ENCODE measurements at regions of chr10 and their contacts with region 1.

Region 1: GRCh38 chr10:43255634-43256431 is 11.0 kb downstream of the RASGEF1A start:
- DNase-seq: peak; percentile 36 to 73
- ATAC-seq: peak; percentile 68 to 75 (median 72)
- H3K4me3 ChIP-seq: no peak overlapping the region
- H3K4me3 Mint-ChIP-seq: peak overlapping the region; percentile 55
- H3K27ac ChIP-seq: peak overlapping the region; percentile 74
- H3K27ac Mint-ChIP-seq: peak overlapping the region; percentile 48 to 86
- H3K4me1 ChIP-seq: peaks cover 58% of the 10 kb centered on the region
- H3K4me1 Mint-ChIP-seq: peaks cover 27 to 57% of the 10 kb centered on the region in 2 donors
- H3K27me3 ChIP-seq: no peaks in the 10 kb centered on the region
- H3K27me3 Mint-ChIP-seq: no peaks in the 10 kb centered on the region
- CTCF ChIP-seq: peak; percentile 67

Region 2: DNA sequence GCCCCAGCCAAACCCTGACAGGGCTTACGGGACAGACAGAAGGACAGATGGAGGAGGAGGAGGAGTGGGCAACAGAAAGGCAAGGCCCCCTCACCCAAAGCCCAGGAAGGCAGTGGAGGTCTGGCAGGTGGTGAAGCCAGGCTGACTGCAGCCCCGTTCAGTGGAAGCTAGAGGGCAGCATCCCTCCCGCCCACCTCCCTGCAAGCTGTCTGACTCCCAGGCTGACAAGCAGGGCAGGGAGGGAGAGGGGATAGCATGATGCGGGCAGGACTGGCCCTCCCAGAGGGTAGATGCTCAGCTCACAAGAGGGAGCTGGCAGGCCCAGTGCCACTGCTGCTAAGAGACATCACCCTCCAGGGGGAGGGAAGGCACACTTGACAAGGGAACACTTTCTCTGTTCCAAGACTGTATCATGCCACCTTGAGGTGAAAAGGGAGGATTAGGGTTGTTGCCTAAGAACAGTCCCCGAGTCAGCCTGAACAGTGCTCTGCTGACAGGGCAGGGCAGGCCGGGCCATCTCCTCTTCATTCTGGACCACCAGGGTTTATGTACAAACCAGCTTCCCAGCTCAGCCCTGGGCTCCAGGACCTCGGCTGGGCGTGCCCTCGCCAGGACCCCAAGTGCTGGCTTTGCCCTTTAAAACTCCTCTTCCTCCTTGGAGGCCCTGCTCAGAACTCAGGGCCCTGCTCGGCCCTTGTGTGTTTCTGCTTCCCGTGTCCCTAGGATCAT is 50.7 kb before region 1 on chr10:
- intact Hi-C with region 1: loop called (anchors 2 kb)
- DNase-seq: peak; percentile 19 to 75
- ATAC-seq: peak; percentile 45 to 55 (median 54)
- H3K4me3 ChIP-seq: no peak overlapping the region
- H3K4me3 Mint-ChIP-seq: no peak overlapping the region
- H3K27ac ChIP-seq: no peak overlapping the region
- H3K27ac Mint-ChIP-seq: peak overlapping the region in 1 of 2 donors; percentile 66
- H3K4me1 ChIP-seq: peaks cover 43% of the 10 kb centered on the region
- H3K4me1 Mint-ChIP-seq: peaks cover 6 to 17% of the 10 kb centered on the region in 2 donors
- H3K27me3 ChIP-seq: no peaks in the 10 kb centered on the region
- H3K27me3 Mint-ChIP-seq: no peaks in the 10 kb centered on the region
- CTCF ChIP-seq: peak; percentile 78

Region 3: DNA sequence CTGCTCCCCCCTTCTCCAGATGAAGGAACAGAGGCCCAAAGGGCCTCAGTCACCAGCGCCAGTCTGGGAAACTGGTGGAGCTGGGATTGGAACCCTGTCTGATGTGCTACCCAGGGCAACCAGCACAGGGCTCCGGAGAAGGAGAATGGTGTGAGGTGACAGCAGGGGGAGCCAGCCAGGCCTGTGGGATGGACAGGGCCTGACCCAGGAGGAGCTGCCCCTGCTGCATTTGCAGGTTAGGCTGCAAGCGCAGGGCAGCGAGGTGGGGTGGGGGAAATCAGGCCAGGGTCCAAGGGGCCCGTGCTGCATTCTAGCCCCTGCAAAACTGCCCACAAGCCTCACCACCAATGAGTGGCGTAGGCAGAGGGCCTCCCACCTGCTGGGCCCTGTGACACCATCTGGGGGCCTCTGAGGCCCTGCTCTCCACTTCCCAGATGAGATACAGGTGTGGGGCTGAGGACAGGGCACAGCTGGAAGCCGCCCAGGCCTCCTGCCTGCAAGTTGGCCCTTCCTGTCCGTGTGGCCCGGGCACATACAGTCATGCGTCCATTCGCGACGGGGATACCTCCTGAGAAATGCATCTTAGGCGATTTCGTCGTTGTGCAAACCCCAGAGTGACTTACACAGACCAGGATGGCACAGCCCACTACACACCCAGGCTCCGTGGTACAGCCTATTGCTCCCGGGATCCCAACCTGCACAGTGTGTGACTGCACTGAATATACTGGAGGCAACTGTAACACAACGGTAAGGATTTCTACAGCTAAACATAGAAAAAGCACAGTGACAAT is 34.2 kb before region 1 on chr10:
- intact Hi-C with region 1: loop called (anchors 5 kb)
- DNase-seq: peak in 1 of 2 donors; percentile 34
- ATAC-seq: peak in 1 of 3 donors; percentile 28
- H3K4me3 ChIP-seq: no peak overlapping the region
- H3K4me3 Mint-ChIP-seq: no peak overlapping the region
- H3K27ac ChIP-seq: no peak overlapping the region
- H3K27ac Mint-ChIP-seq: peak overlapping the region in 1 of 2 donors; percentile 65
- H3K4me1 ChIP-seq: peaks cover 27% of the 10 kb centered on the region
- H3K4me1 Mint-ChIP-seq: peaks cover 11 to 58% of the 10 kb centered on the region in 2 donors
- H3K27me3 ChIP-seq: no peaks in the 10 kb centered on the region
- H3K27me3 Mint-ChIP-seq: peaks cover 0 to 5% of the 10 kb centered on the region in 2 donors
- CTCF ChIP-seq: no peak

Region 4: GRCh38 chr10:43234471-43235041 is 21.3 kb before region 1 on chr10:
- intact Hi-C with region 1: no loop called
- DNase-seq: peak in 1 of 2 donors; percentile 9
- ATAC-seq: no peak
- H3K4me3 ChIP-seq: no peak overlapping the region
- H3K4me3 Mint-ChIP-seq: no peak overlapping the region
- H3K27ac ChIP-seq: no peak overlapping the region
- H3K27ac Mint-ChIP-seq: no peak overlapping the region
- H3K4me1 ChIP-seq: peaks cover 27% of the 10 kb centered on the region
- H3K4me1 Mint-ChIP-seq: peaks cover 27 to 50% of the 10 kb centered on the region in 2 donors
- H3K27me3 ChIP-seq: no peaks in the 10 kb centered on the region
- H3K27me3 Mint-ChIP-seq: peaks cover 2% of the 10 kb centered on the region in 2 donors
- CTCF ChIP-seq: no peak

Measured in natural killer cell (primary cell).